A549 (cell line): ENCODE measurements at regions of chr12 and their contacts with region 1.

Region 1: DNA sequence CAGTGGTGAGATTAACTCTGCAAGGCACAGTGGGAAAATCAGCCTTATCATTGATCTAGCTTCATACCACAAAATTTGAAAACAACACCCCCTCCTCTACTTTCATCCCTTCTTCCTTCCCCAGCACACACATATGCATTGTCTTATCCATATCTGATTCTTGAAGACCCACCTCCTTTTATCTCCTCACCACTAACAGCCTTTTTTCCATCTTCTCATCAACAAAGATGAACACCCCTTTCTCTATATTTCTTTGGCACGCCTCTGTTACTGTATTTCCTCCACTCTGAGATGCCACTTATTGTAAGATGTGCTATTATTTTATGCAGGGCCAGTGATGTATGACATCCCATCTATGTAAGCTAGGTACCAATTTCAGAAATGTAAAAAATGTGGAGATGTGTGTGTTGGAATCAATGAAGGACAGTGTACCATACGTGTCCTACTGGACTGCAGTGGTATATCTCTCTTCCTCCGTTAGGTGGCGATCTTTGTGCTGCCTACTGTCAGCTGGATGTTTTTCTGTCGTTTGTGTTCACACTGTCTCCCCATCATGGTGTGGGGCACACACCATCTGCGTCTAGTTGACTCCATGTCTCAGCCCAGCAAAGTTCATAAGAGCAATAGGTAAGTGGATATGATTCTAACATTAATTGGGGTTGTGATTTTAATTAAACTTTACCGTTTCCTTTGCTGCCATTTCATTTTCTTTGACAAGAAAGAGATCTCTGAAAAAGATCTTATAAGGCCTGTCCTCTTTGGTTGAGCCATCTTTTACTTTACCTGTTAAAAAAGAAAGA is 24.0 kb downstream of the CCDC38 start:
- DNase-seq: peak; percentile 53 to 71
- ATAC-seq: peak; percentile 95 to 98
- H3K4me3 ChIP-seq: no peak overlapping the region
- H3K27ac ChIP-seq: no peak overlapping the region
- H3K4me1 ChIP-seq: no peaks in the 10 kb centered on the region
- CTCF ChIP-seq: peak; percentile 78
- EP300 ChIP-seq: no peak
- POLR2A ChIP-seq: no peak
- RAD21 ChIP-seq: peak; percentile 72 to 89

Region 2: GRCh38 chr12:95804296-95804695 is 114.1 kb before region 1 on chr12:
- CTCF ChIA-PET with region 1: no interaction called
- POLR2A ChIA-PET with region 1: no interaction called
- DNase-seq: peak in 1 of 2 experiments; percentile 75
- ATAC-seq: no peak
- H3K4me3 ChIP-seq: no peak overlapping the region
- H3K27ac ChIP-seq: peak overlapping the region; percentile 81 to 90
- H3K4me1 ChIP-seq: peaks cover 77% of the 10 kb centered on the region
- CTCF ChIP-seq: no peak
- EP300 ChIP-seq: no peak
- POLR2A ChIP-seq: no peak
- RAD21 ChIP-seq: no peak

Region 3: GRCh38 chr12:95896846-95897245 is 21.5 kb before region 1 on chr12:
- CTCF ChIA-PET with region 1: interaction called, 16 read pairs
- POLR2A ChIA-PET with region 1: no interaction called
- DNase-seq: no peak
- ATAC-seq: no peak
- H3K4me3 ChIP-seq: no peak overlapping the region
- H3K27ac ChIP-seq: no peak overlapping the region
- H3K4me1 ChIP-seq: no peaks in the 10 kb centered on the region
- CTCF ChIP-seq: no peak
- EP300 ChIP-seq: no peak
- POLR2A ChIP-seq: no peak
- RAD21 ChIP-seq: no peak

Region 4: DNA sequence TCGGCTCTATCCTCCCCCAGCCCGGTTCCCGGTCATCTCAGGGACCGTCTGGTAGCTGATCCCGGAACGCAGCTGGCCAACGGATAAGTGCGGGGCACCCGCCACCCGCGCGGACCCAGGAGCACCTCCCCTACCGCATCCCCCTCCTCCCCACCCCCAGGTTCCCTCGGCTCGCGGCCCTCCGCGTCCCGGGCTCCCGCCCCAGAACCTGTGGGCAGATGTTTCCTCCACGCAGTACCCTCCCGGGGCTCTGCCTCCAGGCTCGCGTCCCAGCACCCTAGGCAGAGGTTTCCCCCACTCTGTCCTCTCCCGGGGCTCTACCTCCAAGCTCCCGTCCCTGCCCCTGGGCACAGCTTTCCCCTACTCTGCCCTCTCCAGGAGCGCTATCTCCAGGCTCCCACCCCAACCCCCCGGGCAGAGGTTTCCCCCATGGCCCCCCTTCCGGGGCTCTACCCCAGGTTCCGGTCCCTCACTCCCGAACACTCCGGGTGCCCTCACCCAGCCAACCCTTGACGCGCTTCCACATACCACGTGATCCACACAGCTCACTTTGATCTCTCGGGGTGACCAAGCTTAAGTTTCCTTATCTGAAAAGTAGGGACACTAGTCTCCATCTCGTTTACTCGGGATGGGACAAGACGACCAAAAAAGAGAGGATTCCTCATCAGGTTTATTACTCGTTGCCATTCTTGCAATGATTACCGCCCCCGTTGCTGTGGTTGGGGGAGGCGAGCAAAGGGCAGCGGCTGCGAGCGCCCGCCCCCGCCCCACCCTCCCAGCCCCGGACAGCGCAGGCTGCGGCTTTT is 24.3 kb after region 1 on chr12 and contains the start of gene CCDC38:
- CTCF ChIA-PET with region 1: interaction called, 46 read pairs
- POLR2A ChIA-PET with region 1: interaction called, 7 read pairs
- DNase-seq: peak; percentile 93 to 99
- ATAC-seq: peak; percentile 95 to 97
- H3K4me3 ChIP-seq: peak within 1 kb of the TSS; percentile 82
- H3K27ac ChIP-seq: peak within 1 kb of the TSS; percentile 96 to 99
- H3K4me1 ChIP-seq: peaks cover 25% of the 10 kb centered on the region
- CTCF ChIP-seq: no peak
- EP300 ChIP-seq: no peak
- POLR2A ChIP-seq: peak; percentile 79
- RAD21 ChIP-seq: no peak; a peak in 1 of 5 replicates
- polyA plus RNA-seq, gene CCDC38: 0.37 and 0.41 TPM in 2 replicates

Region 5: GRCh38 chr12:95956557-95957145 is 38.3 kb after region 1 on chr12:
- CTCF ChIA-PET with region 1: interaction called, 16 read pairs
- POLR2A ChIA-PET with region 1: no interaction called
- DNase-seq: no peak
- ATAC-seq: no peak
- H3K4me3 ChIP-seq: no peak overlapping the region
- H3K27ac ChIP-seq: no peak overlapping the region
- H3K4me1 ChIP-seq: no peaks in the 10 kb centered on the region
- CTCF ChIP-seq: no peak
- EP300 ChIP-seq: no peak
- POLR2A ChIP-seq: no peak
- RAD21 ChIP-seq: no peak

Region 6: GRCh38 chr12:95998611-95999286 is 80.4 kb after region 1 on chr12:
- CTCF ChIA-PET with region 1: interaction called, 44 read pairs
- POLR2A ChIA-PET with region 1: no interaction called
- DNase-seq: peak; percentile 50 to 74
- ATAC-seq: peak; percentile 83 to 96; a peak in 5 of 6 replicates
- H3K4me3 ChIP-seq: no peak overlapping the region
- H3K27ac ChIP-seq: no peak overlapping the region
- H3K4me1 ChIP-seq: peaks cover 27% of the 10 kb centered on the region; the same call in 2 of the 3 replicates
- CTCF ChIP-seq: peak; percentile 71
- EP300 ChIP-seq: no peak
- POLR2A ChIP-seq: no peak
- RAD21 ChIP-seq: peak; percentile 67 to 82

Region 7: DNA sequence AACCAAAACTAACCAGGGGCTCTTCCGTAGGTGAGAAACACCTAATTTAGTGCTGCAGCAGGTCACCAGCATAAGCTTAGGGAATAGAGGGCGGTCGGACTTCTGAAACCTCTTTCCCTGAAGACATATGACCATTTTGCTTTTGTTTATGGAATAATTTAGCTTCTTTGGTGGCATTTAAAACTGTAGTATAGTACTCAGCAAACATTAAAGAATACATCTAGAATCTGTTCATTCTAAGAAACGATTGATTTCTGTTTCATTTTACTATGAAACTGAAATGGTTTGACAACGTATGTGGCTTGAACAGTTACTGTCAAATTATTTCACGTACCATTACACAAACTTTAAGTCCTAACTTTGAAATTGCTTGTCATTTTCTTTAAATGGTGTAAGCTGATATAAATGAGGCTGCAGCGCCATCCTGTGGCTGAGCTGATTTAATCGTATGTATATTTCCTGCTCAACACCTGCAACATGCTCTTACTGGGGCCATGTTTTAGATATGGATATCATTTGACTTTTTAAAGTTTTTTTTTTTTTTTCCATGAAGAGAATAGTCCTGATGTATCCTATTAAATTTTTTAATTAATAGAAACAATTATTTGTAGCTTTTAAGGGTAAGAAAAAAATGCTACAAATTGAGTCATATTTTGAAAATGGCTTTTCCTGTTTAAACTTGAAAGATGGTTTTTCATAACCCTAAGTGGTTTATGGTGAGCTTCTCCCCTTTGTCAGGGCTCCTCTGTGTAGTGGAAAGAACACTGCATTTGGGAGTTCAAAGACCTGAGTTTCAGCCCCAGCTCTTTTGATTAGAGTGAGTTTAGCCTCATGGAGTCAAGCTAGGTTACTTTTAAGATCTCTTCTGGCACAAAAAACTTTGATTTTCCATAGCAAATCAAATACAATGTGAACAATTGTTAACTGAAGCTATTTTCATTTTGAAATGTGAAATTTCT is 598.4 kb after region 1 on chr12:
- CTCF ChIA-PET with region 1: interaction called, 12 read pairs
- POLR2A ChIA-PET with region 1: no interaction called
- DNase-seq: peak; percentile 56 to 84
- ATAC-seq: peak; percentile 80 to 90; a peak in 5 of 6 replicates
- H3K4me3 ChIP-seq: no peak overlapping the region
- H3K27ac ChIP-seq: no peak overlapping the region
- H3K4me1 ChIP-seq: peaks cover 9% of the 10 kb centered on the region; the same call in 1 of the 3 replicates
- CTCF ChIP-seq: peak; percentile 90
- EP300 ChIP-seq: no peak
- POLR2A ChIP-seq: no peak
- RAD21 ChIP-seq: peak; percentile 94 to 95